ENCODE measurements at regions of chr5 and their contacts with region 1.

Region 1: DNA sequence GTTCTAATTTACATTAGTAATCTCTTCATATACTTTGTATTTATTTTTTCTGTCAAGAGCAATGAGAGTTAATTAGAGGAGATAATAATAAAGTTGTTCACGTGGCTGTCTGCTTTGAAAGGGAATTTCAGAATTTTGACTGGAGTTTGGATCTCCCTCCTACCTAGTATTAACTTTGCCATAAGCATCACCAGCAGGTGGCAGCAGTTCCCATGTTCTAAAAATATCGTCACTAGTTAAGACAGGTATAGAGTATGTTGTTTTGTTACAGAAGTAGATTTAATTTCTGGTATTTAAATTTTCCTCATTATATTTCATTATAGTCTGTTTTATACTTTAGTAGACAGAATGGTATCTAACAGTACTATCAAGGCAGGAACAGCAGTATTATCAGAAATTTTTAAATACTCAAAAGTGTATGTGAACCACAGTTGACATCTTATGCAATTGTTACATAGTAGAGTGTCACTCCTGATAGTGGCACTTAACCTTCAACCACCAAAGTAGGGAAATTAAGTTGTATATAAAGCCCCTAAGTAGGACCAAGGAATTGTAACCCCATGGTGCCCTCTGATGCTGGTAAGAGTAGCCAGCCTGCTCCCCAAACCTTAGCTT is 20.4 kb downstream of the GNPDA1 start:
- DNase-seq: peak; percentile 89
- ATAC-seq: peak; percentile 88
- H3K4me3 Mint-ChIP-seq: no peak overlapping the region
- H3K27ac Mint-ChIP-seq: peak overlapping the region; percentile 19
- H3K4me1 Mint-ChIP-seq: no peaks in the 10 kb centered on the region
- H3K27me3 Mint-ChIP-seq: no peaks in the 10 kb centered on the region

Region 2: DNA sequence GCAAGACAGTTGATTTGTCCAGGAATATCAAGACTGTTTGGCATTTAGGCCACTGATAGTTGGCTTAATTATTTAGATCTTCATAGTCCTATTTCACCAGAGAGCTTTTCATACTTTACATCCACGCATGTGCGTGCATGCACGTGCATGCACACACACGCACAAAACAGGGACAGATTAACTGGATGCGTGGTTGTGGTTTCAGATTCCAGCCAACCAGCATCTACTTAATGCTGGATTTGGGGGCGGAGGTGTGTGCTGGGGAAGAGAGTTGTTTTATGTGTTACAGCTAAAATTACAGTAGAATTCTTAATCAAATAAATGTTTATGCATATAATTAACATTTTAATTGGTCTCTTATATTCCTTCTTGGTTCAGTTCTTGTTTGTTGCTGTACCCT is 16.3 kb before region 1 on chr5:
- CTCF ChIA-PET with region 1: interaction called, 43 read pairs
- POLR2A ChIA-PET with region 1: no interaction called
- intact Hi-C with region 1: no loop called
- DNase-seq: no peak
- ATAC-seq: no peak
- H3K4me3 Mint-ChIP-seq: no peak overlapping the region
- H3K27ac Mint-ChIP-seq: no peak overlapping the region
- H3K4me1 Mint-ChIP-seq: peaks cover 28% of the 10 kb centered on the region
- H3K27me3 Mint-ChIP-seq: no peaks in the 10 kb centered on the region

Region 3: GRCh38 chr5:142103360-142103740 is 110.9 kb after region 1 on chr5:
- CTCF ChIA-PET with region 1: no interaction called
- POLR2A ChIA-PET with region 1: no interaction called
- intact Hi-C with region 1: no loop called
- DNase-seq: no peak
- ATAC-seq: no peak
- H3K4me3 Mint-ChIP-seq: no peak overlapping the region
- H3K27ac Mint-ChIP-seq: no peak overlapping the region
- H3K4me1 Mint-ChIP-seq: peaks cover 67% of the 10 kb centered on the region
- H3K27me3 Mint-ChIP-seq: no peaks in the 10 kb centered on the region

Region 4: GRCh38 chr5:142128675-142129208 is 136.3 kb after region 1 on chr5:
- CTCF ChIA-PET with region 1: interaction called, 25 read pairs
- POLR2A ChIA-PET with region 1: no interaction called
- intact Hi-C with region 1: no loop called
- DNase-seq: no peak
- ATAC-seq: peak; percentile 59
- H3K4me3 Mint-ChIP-seq: no peak overlapping the region
- H3K27ac Mint-ChIP-seq: peak overlapping the region; percentile 70
- H3K4me1 Mint-ChIP-seq: peaks cover 57% of the 10 kb centered on the region
- H3K27me3 Mint-ChIP-seq: no peaks in the 10 kb centered on the region

Region 5: DNA sequence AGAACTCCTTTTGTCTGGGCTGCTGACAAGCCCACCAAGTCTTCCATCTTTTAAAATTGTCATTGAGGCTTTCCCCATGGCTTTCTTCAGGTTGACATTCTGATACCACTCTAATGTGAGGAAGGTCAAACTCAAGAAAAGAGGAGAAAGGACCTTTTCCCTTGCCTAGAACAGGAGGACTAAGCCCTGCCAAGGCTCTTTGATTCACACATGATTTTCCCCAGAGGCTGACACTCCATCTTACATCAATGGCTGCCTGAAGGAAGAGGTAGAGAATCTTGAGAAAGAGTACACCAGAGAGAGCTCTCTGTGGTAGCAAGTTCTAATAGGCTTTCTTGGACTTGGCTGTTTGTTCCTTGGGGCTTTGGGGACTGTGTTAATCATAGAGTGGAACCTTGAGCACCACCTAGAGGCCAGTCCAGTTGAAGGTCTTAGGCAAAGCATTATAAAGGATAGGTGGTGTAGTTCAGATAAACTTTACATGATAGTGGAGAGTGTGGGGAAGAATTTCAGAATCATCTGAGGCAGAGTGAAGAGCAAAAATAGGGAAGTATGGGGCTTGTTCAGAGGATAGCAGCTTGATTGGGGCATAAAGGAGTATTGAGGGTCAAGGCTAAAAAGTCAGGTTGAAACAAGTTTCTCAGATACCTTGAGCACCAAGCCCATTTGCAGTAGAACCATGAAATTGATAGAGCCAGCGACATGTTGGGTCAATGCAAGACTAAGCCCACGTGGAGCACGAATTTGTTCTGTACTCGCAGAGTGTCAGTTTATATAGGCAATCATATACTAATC is 152.8 kb after region 1 on chr5:
- CTCF ChIA-PET with region 1: interaction called, 352 read pairs
- POLR2A ChIA-PET with region 1: interaction called, 14 read pairs
- intact Hi-C with region 1: loop called (anchors 1 kb)
- DNase-seq: peak; percentile 78
- ATAC-seq: peak; percentile 93
- H3K4me3 Mint-ChIP-seq: no peak overlapping the region
- H3K27ac Mint-ChIP-seq: no peak overlapping the region
- H3K4me1 Mint-ChIP-seq: peaks cover 7% of the 10 kb centered on the region
- H3K27me3 Mint-ChIP-seq: no peaks in the 10 kb centered on the region

Region 6: GRCh38 chr5:142548739-142549275 is 556.4 kb after region 1 on chr5:
- CTCF ChIA-PET with region 1: no interaction called
- POLR2A ChIA-PET with region 1: no interaction called
- intact Hi-C with region 1: loop called (anchors 2 to 10 kb)
- DNase-seq: peak; percentile 51
- ATAC-seq: peak; percentile 92
- H3K4me3 Mint-ChIP-seq: no peak overlapping the region
- H3K27ac Mint-ChIP-seq: no peak overlapping the region
- H3K4me1 Mint-ChIP-seq: peaks cover 15% of the 10 kb centered on the region
- H3K27me3 Mint-ChIP-seq: peaks cover 9% of the 10 kb centered on the region